Right ventricle myocardium inferior (tissue), 1 donor: ENCODE measurements at regions of chr6 and their contacts with region 1.

Region 1: DNA sequence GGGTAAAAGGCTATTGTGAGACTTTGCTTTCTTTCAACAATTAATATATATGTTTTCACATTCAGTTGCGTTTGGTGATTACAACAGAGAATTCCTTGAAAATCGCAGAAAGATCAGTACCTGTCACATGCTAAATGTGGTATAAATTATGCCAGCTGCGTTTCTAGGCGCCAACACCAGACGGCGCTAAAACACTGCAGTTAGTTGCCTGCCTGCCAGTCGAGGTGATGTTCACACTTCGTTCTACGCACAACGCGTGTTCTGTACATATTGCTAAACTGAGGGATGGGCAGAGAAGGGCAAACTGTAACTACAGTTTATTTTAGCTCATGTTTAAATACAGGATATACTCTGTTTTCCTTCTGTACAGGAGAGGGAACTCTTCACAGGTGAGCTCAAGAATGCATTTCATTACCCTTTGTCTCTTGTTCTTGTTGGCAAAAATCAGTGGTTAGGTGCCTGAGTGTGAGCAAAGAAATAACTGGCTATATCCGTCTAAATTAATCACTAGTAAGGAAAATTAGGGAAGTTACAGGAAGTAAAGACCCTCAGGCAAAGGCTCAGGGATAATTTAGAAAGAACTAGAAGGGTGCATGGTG is 100.1 kb upstream of the RGS17 start:
- DNase-seq: no peak
- ATAC-seq: no peak

Region 2: GRCh38 chr6:153150752-153151440 is 80.3 kb before region 1 on chr6:
- intact Hi-C with region 1: no loop called
- DNase-seq: no peak
- ATAC-seq: no peak

Region 3: DNA sequence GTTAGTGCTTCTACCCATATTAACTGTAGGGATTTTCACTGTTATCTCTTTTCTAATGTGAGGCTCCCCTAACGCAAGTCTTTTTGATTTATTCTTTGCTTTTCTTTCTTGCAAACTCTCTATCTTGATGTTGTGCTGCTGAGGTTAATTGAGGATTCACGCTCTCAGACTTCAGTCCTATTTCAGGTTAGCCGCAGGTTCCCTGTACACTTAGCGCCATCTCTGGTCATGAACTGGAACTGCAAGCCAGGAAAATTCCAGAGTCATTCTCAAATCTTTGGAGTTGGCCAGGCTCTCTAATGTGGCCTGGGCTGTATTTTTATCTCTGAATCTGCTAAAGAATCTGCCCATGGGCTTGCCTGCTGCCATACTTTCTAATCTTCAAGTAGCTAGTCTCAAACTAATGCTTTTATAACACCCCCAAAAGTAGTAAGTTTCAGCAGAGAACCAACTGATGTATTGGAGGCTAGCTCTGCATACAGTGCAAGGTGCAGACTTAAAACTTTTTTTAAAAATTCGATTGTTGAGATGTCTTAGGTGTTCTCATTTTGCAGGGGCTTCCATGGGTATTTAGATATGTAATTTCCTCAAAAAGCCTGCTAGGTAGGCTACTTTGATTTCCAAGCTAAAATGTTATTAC is 716.8 kb after region 1 on chr6:
- intact Hi-C with region 1: loop called (anchors 5 kb)
- DNase-seq: no peak
- ATAC-seq: no peak